ENCODE measurements at regions of chr20 and their contacts with region 1.

Region 1: DNA sequence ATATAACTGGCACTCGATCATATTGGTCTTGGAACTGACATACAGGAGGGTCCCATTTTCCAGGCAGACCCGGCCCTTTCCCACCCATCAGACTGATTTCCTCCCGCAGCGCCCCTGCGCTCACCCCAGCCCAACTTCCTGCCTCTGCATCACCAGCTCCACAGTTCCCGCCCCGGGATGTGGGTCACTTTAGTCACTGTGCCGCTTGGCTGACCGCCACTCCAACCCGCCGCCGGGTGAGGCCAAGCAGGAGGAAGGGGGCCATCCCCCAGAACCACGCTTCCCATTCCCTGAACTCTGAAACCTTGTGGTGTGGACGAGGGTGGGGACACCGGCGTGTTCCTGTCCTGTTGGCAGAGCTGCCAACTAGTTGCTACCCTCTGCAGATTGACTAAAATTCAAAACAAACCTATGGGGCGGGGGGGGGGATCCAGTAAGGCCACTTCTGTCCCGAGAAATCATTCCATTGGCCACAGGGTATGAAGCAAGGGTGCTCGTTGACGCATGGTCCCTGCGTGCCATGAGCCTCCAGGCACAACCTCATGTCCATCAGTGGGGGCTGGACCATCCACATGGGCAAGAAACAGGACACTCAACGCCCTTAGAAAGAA is 12.3 kb downstream of the TGM2 start:
- DNase-seq: peak; percentile 35 to 72 (median 64)
- H3K4me3 ChIP-seq: no peak overlapping the region
- H3K27ac ChIP-seq: peak overlapping the region in 1 of 2 donors; percentile 30
- H3K4me1 ChIP-seq: peaks cover 4% of the 10 kb centered on the region
- H3K27me3 ChIP-seq: no peaks in the 10 kb centered on the region
- CTCF ChIP-seq: no peak
- EP300 ChIP-seq: no peak
- POLR2A ChIP-seq: no peak

Region 2: GRCh38 chr20:38073307-38074071 is 79.2 kb before region 1 on chr20:
- intact Hi-C with region 1: loop called in 1 of 4 experiments (anchors 10 kb)
- DNase-seq: peak; percentile 50 to 69 (median 58)
- H3K4me3 ChIP-seq: no peak overlapping the region
- H3K27ac ChIP-seq: peak overlapping the region in 1 of 2 donors; percentile 49
- H3K4me1 ChIP-seq: peaks cover 16% of the 10 kb centered on the region
- H3K27me3 ChIP-seq: no peaks in the 10 kb centered on the region
- CTCF ChIP-seq: peak; percentile 71 to 84 (median 73)
- EP300 ChIP-seq: no peak
- POLR2A ChIP-seq: no peak

Region 3: GRCh38 chr20:38084400-38084951 is 68.2 kb before region 1 on chr20:
- intact Hi-C with region 1: loop called in 2 of 4 experiments (anchors 5 to 10 kb)
- DNase-seq: no peak
- H3K4me3 ChIP-seq: no peak overlapping the region
- H3K27ac ChIP-seq: no peak overlapping the region
- H3K4me1 ChIP-seq: peaks cover 16% of the 10 kb centered on the region
- H3K27me3 ChIP-seq: no peaks in the 10 kb centered on the region
- CTCF ChIP-seq: no peak
- EP300 ChIP-seq: no peak
- POLR2A ChIP-seq: no peak